Left cardiac atrium (tissue), 4 donors: ENCODE measurements at regions of chr2 and their contacts with region 1.

Region 1: DNA sequence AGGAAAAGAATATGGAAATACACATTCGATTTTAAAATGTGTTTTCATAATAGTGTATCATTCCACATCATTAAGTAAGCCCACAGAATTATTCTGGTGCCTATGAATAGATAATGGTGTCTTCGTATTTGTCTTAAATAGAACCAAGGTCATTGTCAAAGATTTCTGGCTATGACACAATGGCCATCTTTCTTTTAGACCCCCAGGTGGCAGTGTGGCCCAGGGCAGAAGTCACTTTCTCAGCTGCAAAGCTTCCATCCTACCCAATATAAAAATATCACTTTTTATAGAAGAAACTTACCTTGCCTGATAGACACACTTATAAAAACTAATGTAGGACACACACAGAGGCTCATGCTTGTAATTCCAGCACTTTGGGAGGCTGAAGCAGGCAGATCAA is 57.5 kb downstream of the ZRANB3 start:
- DNase-seq: no peak
- ATAC-seq: no peak

Region 2: GRCh38 chr2:135709992-135710391 is 236.4 kb after region 1 on chr2:
- intact Hi-C with region 1: loop called in 1 of 2 experiments (anchors 5 kb)
- DNase-seq: peak; percentile 46
- ATAC-seq: peak; percentile 47 to 60

Region 3: DNA sequence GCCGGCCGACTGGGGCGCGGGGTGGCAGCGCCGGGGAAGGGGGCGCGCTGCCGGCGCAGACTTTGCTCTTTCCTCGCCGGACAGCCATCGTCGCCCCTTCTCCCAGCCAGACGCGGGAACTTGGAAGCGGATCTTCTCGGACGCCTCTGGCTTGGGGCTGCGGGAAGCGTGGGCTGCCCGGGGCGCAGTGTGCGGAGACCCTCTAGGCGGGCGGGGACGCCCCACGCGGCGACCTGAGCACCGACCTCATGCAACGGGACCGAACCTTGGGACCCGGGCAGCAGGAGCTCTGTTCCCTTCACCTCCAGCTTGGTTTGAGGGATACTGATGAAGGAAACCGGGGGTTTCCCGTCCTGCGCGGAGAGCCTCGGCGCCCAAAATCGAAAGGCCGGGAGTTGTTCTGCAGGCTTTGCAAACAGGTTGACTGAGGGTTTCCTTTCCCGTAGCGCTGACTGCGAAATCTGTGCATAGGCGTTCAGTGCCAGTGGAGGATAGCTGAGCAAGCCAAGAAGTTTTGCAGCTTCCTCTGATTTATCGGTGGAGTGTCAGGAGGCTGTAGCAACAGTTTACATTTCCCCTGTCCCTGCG is 1292.3 kb after region 1 on chr2:
- intact Hi-C with region 1: no loop called
- DNase-seq: no peak
- ATAC-seq: peak; percentile 19 to 43